Activated CD4-positive, alpha-beta T cell treated with anti-CD3 and anti-CD28 coated beads for 36 hours (primary cell): ENCODE measurements at regions of chr2 and their contacts with region 1.

Region 1: GRCh38 chr2:69724540-69725159 is 17.3 kb upstream of the ANXA4 start:
- DNase-seq: peak; percentile 92
- ATAC-seq: peak; percentile 92
- H3K4me3 Mint-ChIP-seq: peak overlapping the region; percentile 47
- H3K27ac Mint-ChIP-seq: peak overlapping the region; percentile 20
- H3K4me1 Mint-ChIP-seq: peaks cover 4% of the 10 kb centered on the region
- H3K27me3 Mint-ChIP-seq: no peaks in the 10 kb centered on the region

Region 2: DNA sequence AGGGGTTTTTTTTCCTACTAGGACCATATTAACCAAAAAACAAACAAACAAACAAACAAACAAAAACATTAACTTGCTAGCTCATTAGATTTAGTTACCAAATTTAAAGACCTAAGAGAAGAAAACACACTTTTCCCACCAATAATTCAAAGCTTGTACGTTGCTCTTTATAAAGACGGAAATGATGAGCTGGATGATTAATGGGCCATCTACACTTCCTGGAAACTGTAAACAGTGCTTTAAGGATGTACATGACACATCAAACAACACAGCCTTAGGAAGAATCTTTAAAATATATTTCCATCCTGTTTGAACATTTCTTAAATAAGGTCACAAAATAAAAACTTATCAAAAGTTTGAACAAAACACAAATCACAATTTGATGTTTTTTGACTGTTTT is 854.4 kb before region 1 on chr2:
- CTCF ChIA-PET with region 1: no interaction called
- POLR2A ChIA-PET with region 1: no interaction called
- intact Hi-C with region 1: no loop called
- DNase-seq: no peak
- ATAC-seq: no peak
- H3K4me3 Mint-ChIP-seq: no peak overlapping the region
- H3K27ac Mint-ChIP-seq: no peak overlapping the region
- H3K4me1 Mint-ChIP-seq: no peaks in the 10 kb centered on the region
- H3K27me3 Mint-ChIP-seq: peaks cover 4% of the 10 kb centered on the region

Region 3: GRCh38 chr2:69694894-69695849 is 29.5 kb before region 1 on chr2:
- CTCF ChIA-PET with region 1: interaction called, 17 read pairs
- POLR2A ChIA-PET with region 1: no interaction called
- intact Hi-C with region 1: no loop called
- DNase-seq: no peak
- ATAC-seq: peak; percentile 69
- H3K4me3 Mint-ChIP-seq: peak overlapping the region; percentile 7
- H3K27ac Mint-ChIP-seq: peak overlapping the region; percentile 1
- H3K4me1 Mint-ChIP-seq: peaks cover 90% of the 10 kb centered on the region
- H3K27me3 Mint-ChIP-seq: no peaks in the 10 kb centered on the region

Region 4: DNA sequence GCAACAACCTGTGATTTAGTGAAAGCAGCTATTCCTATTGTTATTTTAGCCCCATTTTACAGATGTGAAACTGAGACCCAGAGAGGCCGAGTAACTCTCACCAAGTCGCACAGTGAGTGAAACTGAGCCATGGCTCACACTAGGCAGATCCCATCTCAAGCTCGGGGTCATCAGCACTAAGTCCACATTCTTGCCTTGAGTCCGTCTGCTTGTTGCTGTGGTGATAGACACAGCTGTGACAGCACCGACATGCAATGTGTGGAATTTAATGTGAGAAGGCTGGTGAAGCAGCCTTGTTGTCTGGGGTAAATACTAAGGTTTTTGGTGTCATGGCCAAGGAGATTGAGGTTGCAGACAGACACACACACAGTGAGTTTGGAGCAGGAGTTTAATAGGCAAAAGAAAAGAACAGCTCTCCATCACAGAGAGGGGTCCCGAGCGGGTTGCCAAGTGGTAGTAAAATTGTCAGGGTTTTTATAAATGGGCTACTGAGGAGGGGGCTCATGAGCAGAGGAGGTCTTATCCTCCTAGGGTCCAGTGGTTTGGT is 64.6 kb after region 1 on chr2:
- CTCF ChIA-PET with region 1: interaction called, 13 read pairs
- POLR2A ChIA-PET with region 1: no interaction called
- intact Hi-C with region 1: no loop called
- DNase-seq: no peak
- ATAC-seq: no peak
- H3K4me3 Mint-ChIP-seq: no peak overlapping the region
- H3K27ac Mint-ChIP-seq: no peak overlapping the region
- H3K4me1 Mint-ChIP-seq: peaks cover 7% of the 10 kb centered on the region
- H3K27me3 Mint-ChIP-seq: no peaks in the 10 kb centered on the region

Region 5: DNA sequence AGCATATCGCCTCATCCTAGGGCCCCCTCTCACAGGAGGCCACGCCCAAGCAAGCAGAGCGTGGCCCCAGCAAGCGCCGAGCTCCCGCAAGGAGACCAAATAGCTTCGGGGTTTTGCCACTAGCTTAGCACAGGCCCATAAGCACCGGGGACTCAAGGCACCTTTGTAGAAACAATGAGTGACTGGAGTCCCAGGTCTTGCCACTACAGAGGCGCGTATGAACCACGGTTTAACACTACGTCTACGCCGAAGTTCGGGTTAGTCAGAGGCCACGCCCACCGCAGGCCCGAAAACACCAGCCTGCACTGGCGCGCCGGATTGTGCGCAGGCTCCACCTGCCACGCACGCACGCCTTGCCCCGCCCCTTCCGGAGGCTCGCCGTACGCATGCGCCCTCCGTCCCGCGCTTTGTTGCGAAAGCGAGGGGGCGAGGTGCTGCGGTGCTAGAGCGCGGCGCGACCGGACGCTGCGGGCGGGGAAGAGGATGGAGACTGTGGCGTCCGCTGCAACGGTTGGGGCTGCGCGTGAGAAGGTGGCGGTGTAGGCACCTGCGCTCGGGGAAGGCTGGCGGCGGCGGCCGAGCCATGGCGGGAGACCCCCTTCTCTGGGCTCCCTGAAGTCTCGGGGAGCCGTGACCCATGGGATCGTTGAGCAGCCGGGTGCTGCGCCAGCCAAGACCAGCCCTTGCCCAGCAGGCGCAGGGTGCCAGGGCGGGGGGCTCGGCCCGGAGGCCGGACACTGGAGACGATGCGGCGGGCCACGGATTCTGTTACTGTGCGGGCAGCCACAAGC is 104.8 kb after region 1 on chr2 and contains the start of gene GMCL1:
- CTCF ChIA-PET with region 1: interaction called, 38 read pairs
- POLR2A ChIA-PET with region 1: no interaction called
- intact Hi-C with region 1: no loop called
- DNase-seq: peak; percentile 99
- ATAC-seq: peak; percentile 96
- H3K4me3 Mint-ChIP-seq: peak within 1 kb of the TSS; percentile 83
- H3K27ac Mint-ChIP-seq: peak within 1 kb of the TSS; percentile 94
- H3K4me1 Mint-ChIP-seq: peaks cover 49% of the 10 kb centered on the region
- H3K27me3 Mint-ChIP-seq: no peaks in the 10 kb centered on the region
- total RNA-seq, gene GMCL1: 14.5 to 20.3 TPM

Region 6: GRCh38 chr2:69893684-69894551 is 169.3 kb after region 1 on chr2 and contains the start of gene SNRNP27:
- CTCF ChIA-PET with region 1: interaction called, 3 read pairs
- POLR2A ChIA-PET with region 1: interaction called, 5 read pairs
- intact Hi-C with region 1: loop called in 1 of 2 experiments (anchors 2 kb)
- DNase-seq: peak; percentile 89
- ATAC-seq: peak; percentile 87
- H3K4me3 Mint-ChIP-seq: peak within 1 kb of the TSS; percentile 98
- H3K27ac Mint-ChIP-seq: peak within 1 kb of the TSS; percentile 99
- H3K4me1 Mint-ChIP-seq: peaks cover 34% of the 10 kb centered on the region
- H3K27me3 Mint-ChIP-seq: no peaks in the 10 kb centered on the region
- total RNA-seq, gene SNRNP27: 67.7 to 76.6 TPM

Region 7: DNA sequence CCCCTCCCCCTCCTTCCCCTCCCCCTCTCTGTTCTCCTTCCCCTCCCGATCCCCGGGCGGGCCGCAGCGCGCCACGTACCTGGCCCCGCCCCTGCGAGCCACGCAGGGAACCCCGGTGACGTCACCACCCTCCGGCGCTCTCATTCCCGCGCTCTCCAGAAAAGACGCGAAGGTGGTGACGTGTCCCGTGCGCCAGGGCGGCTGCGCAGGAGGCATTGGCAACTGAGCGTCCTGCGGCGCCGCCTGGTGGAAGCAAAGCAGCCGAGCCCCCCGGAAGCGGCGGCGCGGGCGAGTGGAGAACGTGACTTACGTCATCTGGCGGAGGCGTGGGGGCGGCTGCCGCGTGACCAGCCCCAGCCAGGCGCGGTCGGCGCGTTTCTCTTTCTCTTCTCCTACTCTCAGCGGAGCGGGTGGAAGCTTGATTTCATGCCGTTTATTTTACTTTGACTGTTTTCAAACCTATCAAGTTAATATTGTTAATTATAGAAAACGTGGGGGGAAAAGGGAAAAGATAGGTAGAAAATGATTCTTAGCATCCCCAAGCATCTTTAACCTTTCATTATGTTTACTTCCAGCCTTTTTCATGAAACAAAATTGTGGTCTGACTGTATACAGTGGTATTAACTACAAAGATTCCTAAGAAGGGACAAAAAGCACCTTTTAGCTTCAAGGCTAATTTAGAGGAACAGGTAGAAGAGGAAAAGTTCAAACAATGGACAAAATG is 418.1 kb after region 1 on chr2:
- CTCF ChIA-PET with region 1: interaction called, 3 read pairs
- POLR2A ChIA-PET with region 1: no interaction called
- intact Hi-C with region 1: loop called in 1 of 2 experiments (anchors 1 kb)
- DNase-seq: peak; percentile 100
- ATAC-seq: peak; percentile 57
- H3K4me3 Mint-ChIP-seq: peak overlapping the region; percentile 78
- H3K27ac Mint-ChIP-seq: peak overlapping the region; percentile 100
- H3K4me1 Mint-ChIP-seq: peaks cover 66% of the 10 kb centered on the region
- H3K27me3 Mint-ChIP-seq: no peaks in the 10 kb centered on the region